CD4-positive, alpha-beta T cell (primary cell): ENCODE measurements at regions of chr5 and their contacts with region 1.

Region 1: GRCh38 chr5:14871210-14872069 is at the start of gene ANKH:
- DNase-seq: peak; percentile 58 to 95 (median 82)
- ATAC-seq: peak; percentile 85
- H3K4me3 ChIP-seq: peak within 1 kb of the TSS; percentile 82
- H3K4me3 Mint-ChIP-seq: peak within 1 kb of the TSS; percentile 96
- H3K27ac ChIP-seq: peak within 1 kb of the TSS; percentile 64 to 70
- H3K27ac Mint-ChIP-seq: peak within 1 kb of the TSS; percentile 87
- H3K4me1 ChIP-seq: peaks cover 23% of the 10 kb centered on the region
- H3K4me1 Mint-ChIP-seq: peaks cover 31% of the 10 kb centered on the region
- H3K27me3 ChIP-seq: no peaks in the 10 kb centered on the region
- H3K27me3 Mint-ChIP-seq: no peaks in the 10 kb centered on the region
- CTCF ChIP-seq: no peak
- total RNA-seq, gene ANKH: 69.5 to 72.3 TPM

Region 2: DNA sequence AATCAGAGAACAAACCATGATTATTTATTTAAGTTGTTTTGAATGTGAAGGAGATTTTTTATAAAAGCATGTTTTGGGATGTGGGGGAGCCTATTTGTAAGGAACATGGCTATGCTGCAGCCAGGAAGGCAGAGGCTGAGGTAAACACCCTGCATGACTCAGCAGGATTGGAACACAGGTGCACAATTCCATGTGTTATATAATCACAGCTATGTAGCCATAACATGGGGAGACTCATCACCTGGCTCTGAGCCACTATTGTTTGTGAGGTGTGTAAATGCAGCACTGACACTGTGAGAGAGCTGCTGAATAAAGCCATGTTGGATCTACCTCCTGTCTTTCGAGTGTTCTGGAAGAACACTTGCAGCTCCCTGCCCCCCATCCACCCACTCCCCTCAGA is 1936.7 kb before region 1 on chr5:
- CTCF ChIA-PET with region 1: no interaction called
- POLR2A ChIA-PET with region 1: no interaction called
- intact Hi-C with region 1: no loop called
- DNase-seq: no peak
- ATAC-seq: no peak
- H3K4me3 ChIP-seq: no peak overlapping the region
- H3K4me3 Mint-ChIP-seq: no peak overlapping the region
- H3K27ac ChIP-seq: no peak overlapping the region
- H3K27ac Mint-ChIP-seq: no peak overlapping the region
- H3K4me1 ChIP-seq: no peaks in the 10 kb centered on the region
- H3K4me1 Mint-ChIP-seq: no peaks in the 10 kb centered on the region
- H3K27me3 ChIP-seq: no peaks in the 10 kb centered on the region
- H3K27me3 Mint-ChIP-seq: no peaks in the 10 kb centered on the region
- CTCF ChIP-seq: no peak

Region 3: DNA sequence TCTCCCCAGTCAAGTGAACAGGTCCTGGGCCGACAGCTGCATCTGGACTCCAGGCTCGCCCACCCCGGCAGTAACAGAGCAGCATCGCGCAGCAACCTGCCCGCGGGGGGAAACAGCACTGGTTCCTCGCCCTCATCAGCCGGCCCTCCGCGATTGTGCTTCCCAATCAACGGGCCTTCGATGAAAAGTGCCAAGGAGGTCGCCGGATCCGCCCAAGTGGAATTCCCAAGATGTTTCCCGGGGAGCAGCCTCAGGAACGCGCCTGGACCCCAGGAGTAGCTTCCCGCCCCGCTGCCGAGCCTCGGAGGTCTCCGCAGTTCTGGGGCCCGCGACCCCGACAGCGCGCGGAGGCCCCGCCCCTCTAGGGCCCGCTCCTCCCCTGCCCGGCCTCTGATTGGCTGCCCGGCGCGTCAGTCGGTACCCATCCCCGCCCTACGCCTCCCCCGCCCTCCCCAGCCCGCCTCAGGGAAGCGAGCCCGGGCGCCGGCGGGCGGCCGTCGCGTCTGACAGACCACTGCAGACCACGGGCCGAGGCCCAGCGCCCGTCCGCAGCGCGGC is 290.0 kb before region 1 on chr5 and contains the start of gene OTULINL:
- CTCF ChIA-PET with region 1: no interaction called
- POLR2A ChIA-PET with region 1: no interaction called
- intact Hi-C with region 1: loop called in 1 of 2 experiments (anchors 5 kb)
- DNase-seq: peak; percentile 79 to 92 (median 86)
- ATAC-seq: peak; percentile 81
- H3K4me3 ChIP-seq: peak within 1 kb of the TSS; percentile 69
- H3K4me3 Mint-ChIP-seq: peak within 1 kb of the TSS; percentile 90
- H3K27ac ChIP-seq: peak within 1 kb of the TSS; percentile 67 to 79
- H3K27ac Mint-ChIP-seq: peak within 1 kb of the TSS; percentile 93
- H3K4me1 ChIP-seq: peaks cover 34% of the 10 kb centered on the region
- H3K4me1 Mint-ChIP-seq: peaks cover 44% of the 10 kb centered on the region
- H3K27me3 ChIP-seq: no peaks in the 10 kb centered on the region
- H3K27me3 Mint-ChIP-seq: no peaks in the 10 kb centered on the region
- CTCF ChIP-seq: no peak
- total RNA-seq, gene OTULINL: 55.6 to 60.9 TPM

Region 4: DNA sequence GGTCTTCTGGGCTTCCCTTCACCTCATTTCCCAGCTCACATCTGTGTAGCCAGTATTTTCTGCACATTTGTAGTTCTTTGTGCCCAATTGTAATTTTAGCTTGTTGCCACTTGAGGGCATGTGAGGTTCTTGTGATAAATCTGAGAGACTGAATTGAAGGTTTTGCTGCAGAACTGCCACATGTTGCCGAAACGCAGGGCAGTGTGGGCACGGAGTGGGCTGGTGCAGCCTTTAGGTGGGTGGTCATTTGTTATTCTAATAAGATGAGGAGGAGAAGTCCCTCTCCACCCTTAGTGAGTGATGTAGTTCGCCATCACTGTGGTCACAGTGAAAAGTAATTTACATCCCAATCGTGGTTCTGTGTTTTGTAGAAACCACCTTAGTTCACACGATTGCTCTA is 185.7 kb before region 1 on chr5:
- CTCF ChIA-PET with region 1: interaction called, 16 read pairs
- POLR2A ChIA-PET with region 1: interaction called, 4 read pairs
- intact Hi-C with region 1: loop called (anchors 5 kb)
- DNase-seq: peak in 9 of 14 experiments; percentile 15 to 75 (median 30)
- ATAC-seq: peak; percentile 89
- H3K4me3 ChIP-seq: no peak overlapping the region
- H3K4me3 Mint-ChIP-seq: peak overlapping the region; percentile 49
- H3K27ac ChIP-seq: no peak overlapping the region
- H3K27ac Mint-ChIP-seq: peak overlapping the region; percentile 62
- H3K4me1 ChIP-seq: peaks cover 5% of the 10 kb centered on the region
- H3K4me1 Mint-ChIP-seq: peaks cover 16% of the 10 kb centered on the region
- H3K27me3 ChIP-seq: no peaks in the 10 kb centered on the region
- H3K27me3 Mint-ChIP-seq: no peaks in the 10 kb centered on the region
- CTCF ChIP-seq: peak; percentile 86

Region 5: GRCh38 chr5:14727428-14727865 is 144.0 kb before region 1 on chr5:
- CTCF ChIA-PET with region 1: interaction called, 22 read pairs
- POLR2A ChIA-PET with region 1: no interaction called
- intact Hi-C with region 1: loop called in 1 of 2 experiments (anchors 2 kb)
- DNase-seq: peak; percentile 48 to 87 (median 69)
- ATAC-seq: peak; percentile 88
- H3K4me3 ChIP-seq: no peak overlapping the region
- H3K4me3 Mint-ChIP-seq: no peak overlapping the region
- H3K27ac ChIP-seq: no peak overlapping the region
- H3K27ac Mint-ChIP-seq: peak overlapping the region; percentile 67
- H3K4me1 ChIP-seq: peaks cover 4% of the 10 kb centered on the region
- H3K4me1 Mint-ChIP-seq: peaks cover 11% of the 10 kb centered on the region
- H3K27me3 ChIP-seq: no peaks in the 10 kb centered on the region
- H3K27me3 Mint-ChIP-seq: no peaks in the 10 kb centered on the region
- CTCF ChIP-seq: peak; percentile 98

Region 6: DNA sequence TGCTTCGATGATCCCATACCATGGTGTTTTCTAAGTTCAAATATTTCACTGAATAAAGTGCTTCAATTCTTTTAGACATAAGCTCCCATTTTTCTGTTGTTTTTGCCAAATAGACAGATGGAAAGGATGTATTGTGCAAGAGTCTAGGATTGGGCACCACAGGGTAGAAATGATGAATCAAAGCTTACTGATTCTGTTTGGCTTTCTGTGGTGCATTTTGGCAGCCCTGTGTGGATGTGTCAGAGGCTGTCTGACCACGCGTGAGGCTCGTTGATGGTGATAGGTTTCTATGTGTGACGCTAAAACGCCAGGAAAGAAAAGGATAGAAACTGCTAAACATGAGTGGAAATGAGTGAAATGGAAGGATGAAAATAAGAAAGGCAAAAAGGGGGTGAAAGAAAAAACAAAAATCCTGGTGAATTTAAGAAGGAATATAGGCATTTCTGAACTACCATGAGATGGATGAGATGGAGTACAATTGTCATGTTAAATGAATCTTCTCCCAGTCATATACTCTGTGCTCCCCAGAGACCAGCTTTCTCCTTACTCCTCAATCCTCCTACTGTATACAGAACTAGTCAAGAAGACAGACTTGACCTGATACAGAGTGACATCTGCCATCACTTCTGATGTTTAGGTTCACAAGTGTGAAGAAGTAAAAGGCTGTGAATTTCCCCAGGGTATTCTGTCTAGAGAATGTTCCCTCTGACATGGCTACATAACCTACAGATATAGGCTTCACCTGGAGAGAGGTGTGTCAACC is 54.3 kb before region 1 on chr5:
- CTCF ChIA-PET with region 1: no interaction called
- POLR2A ChIA-PET with region 1: interaction called, 3 read pairs
- intact Hi-C with region 1: loop called in 1 of 2 experiments (anchors 5 kb)
- DNase-seq: no peak
- ATAC-seq: no peak
- H3K4me3 ChIP-seq: no peak overlapping the region
- H3K4me3 Mint-ChIP-seq: no peak overlapping the region
- H3K27ac ChIP-seq: no peak overlapping the region
- H3K27ac Mint-ChIP-seq: peak overlapping the region; percentile 21
- H3K4me1 ChIP-seq: peaks cover 25% of the 10 kb centered on the region
- H3K4me1 Mint-ChIP-seq: peaks cover 90% of the 10 kb centered on the region
- H3K27me3 ChIP-seq: no peaks in the 10 kb centered on the region
- H3K27me3 Mint-ChIP-seq: no peaks in the 10 kb centered on the region
- CTCF ChIP-seq: no peak

Region 7: DNA sequence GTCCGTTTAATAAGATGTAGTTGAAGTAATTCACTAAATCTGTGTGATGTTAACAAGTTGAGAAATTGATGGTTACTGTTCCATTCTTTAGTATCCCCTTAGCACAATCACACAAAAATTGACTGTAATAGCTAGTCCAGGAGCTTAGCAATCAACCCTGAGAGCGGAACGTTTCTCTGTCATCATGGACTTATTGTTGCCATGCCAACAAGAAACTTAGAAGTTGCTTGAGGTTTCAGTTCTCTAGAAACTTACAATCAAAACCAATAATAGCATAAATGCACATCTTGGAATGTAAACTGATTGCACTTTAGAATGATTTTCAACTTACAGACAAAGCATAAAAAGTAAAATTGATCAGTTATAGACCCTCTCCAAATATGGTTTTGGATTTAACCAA is 125.6 kb after region 1 on chr5:
- CTCF ChIA-PET with region 1: interaction called, 5 read pairs
- POLR2A ChIA-PET with region 1: interaction called, 11 read pairs
- intact Hi-C with region 1: loop called (anchors 5 kb)
- DNase-seq: peak in 3 of 14 experiments; percentile 24 to 53 (median 44)
- ATAC-seq: no peak
- H3K4me3 ChIP-seq: no peak overlapping the region
- H3K4me3 Mint-ChIP-seq: no peak overlapping the region
- H3K27ac ChIP-seq: no peak overlapping the region
- H3K27ac Mint-ChIP-seq: no peak overlapping the region
- H3K4me1 ChIP-seq: peaks cover 10% of the 10 kb centered on the region
- H3K4me1 Mint-ChIP-seq: peaks cover 13% of the 10 kb centered on the region
- H3K27me3 ChIP-seq: peaks cover 0 to 7% of the 10 kb centered on the region in 2 experiments
- H3K27me3 Mint-ChIP-seq: no peaks in the 10 kb centered on the region
- CTCF ChIP-seq: no peak

Region 8: DNA sequence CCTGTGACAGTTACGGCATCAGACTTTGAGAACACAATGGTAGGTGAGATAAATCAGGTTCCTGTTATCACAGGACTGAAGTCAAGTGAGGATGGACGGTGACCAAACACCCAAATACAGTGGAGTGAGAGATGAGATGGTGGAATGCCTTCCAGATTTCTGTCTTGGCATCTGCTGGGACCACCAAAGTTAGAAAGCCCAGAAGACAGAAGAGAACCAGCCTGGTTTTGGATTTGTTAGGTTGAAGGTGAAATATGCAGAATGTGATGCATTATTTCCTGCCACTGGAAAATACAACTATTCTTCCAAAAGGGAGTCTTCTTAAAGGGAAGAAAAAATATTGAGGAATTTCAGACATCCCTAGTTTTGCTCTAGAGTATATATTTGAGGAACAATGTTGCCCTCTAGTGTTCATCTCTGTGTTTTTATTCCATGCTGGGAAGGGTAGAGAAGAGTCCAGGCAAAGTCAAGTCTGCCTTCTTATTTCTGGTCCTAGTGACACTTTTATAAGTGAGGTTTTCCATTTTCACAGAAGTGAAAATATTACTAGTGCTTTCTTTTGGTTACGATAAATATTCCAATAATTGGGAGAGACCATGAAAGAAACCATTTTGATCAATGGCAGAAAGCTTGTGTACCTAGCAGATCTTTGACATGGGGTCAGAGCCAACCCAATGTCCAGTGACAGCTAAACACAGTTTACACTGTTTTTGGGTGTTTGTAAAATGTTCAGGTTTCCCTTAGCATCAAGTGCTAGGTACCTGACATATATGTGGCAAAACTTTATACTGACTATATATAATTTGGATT is 142.4 kb after region 1 on chr5:
- CTCF ChIA-PET with region 1: no interaction called
- POLR2A ChIA-PET with region 1: no interaction called
- intact Hi-C with region 1: no loop called
- DNase-seq: peak in 3 of 14 experiments; percentile 52 to 59 (median 57)
- ATAC-seq: peak; percentile 55
- H3K4me3 ChIP-seq: no peak overlapping the region
- H3K4me3 Mint-ChIP-seq: no peak overlapping the region
- H3K27ac ChIP-seq: no peak overlapping the region
- H3K27ac Mint-ChIP-seq: no peak overlapping the region
- H3K4me1 ChIP-seq: no peaks in the 10 kb centered on the region
- H3K4me1 Mint-ChIP-seq: no peaks in the 10 kb centered on the region
- H3K27me3 ChIP-seq: no peaks in the 10 kb centered on the region
- H3K27me3 Mint-ChIP-seq: no peaks in the 10 kb centered on the region
- CTCF ChIP-seq: peak; percentile 85